T-cell (primary cell): ENCODE measurements at regions of chr10 and their contacts with region 1.

Region 1: DNA sequence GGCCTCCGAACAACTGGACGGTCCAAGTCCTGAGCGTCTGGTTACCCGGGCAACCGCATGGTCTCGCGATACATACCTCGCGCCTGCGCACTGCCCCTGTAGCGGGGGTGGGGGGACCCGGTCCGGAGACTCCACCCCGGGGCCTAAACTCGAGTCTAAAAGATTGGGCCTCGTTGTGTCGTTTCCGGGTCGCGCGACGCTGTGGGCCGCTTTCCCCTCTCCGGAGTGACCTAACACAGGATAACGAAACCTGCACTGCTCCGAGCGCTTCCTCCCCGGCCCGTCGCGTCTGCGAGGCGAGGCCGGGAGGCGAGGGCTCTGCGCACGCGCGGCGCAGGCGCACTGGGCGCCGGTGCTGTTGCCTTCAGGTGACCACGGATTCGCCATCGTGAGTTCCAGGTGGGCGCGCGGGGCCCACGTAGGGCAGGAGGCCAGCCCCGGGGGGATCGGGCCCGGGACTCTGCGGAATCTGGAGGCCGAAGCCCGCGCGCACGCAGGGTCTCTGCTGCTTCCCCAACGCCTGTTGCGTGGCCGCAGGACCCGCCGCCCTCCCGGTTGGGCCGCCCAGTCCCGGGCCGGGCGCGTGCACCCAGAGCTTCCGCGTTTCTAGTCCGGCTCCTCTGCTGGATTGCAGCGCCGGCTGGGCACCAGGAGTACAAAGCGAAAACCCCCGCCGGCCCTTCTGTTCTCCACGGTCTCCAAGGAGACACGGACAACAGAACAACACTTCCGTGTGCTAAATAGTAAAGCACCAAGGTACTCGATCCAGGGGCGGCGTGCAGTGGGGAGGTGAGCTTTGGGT is at the start of gene RPP38:
- DNase-seq: peak; percentile 82 to 96 (median 90)
- ATAC-seq: peak; percentile 84 to 87 (median 86)
- H3K4me3 ChIP-seq: peak within 1 kb of the TSS; percentile 73 to 84
- H3K4me3 Mint-ChIP-seq: peak within 1 kb of the TSS; percentile 93 to 99 (median 95)
- H3K27ac ChIP-seq: peak within 1 kb of the TSS; percentile 91
- H3K27ac Mint-ChIP-seq: peak within 1 kb of the TSS; percentile 93 to 96
- H3K4me1 ChIP-seq: peaks cover 3 to 33% of the 10 kb centered on the region in 2 experiments
- H3K4me1 Mint-ChIP-seq: peaks cover 37 to 45% (median 43%) of the 10 kb centered on the region in 3 donors
- H3K27me3 ChIP-seq: no peaks in the 10 kb centered on the region
- H3K27me3 Mint-ChIP-seq: no peaks in the 10 kb centered on the region
- total RNA-seq, gene RPP38: 8.2 to 21.0 (median 16.6) TPM

Region 2: GRCh38 chr10:14954001-14954770 is 143.0 kb before region 1 on chr10 and contains the start of gene DCLRE1C:
- CTCF ChIA-PET with region 1: no interaction called
- POLR2A ChIA-PET with region 1: interaction called in 1 of 2 experiments, 10 read pairs
- DNase-seq: peak; percentile 72 to 90 (median 80)
- ATAC-seq: peak; percentile 88 to 92 (median 90)
- H3K4me3 ChIP-seq: peak within 1 kb of the TSS; percentile 80 to 83
- H3K4me3 Mint-ChIP-seq: peak within 1 kb of the TSS; percentile 91 to 94 (median 93)
- H3K27ac ChIP-seq: peak within 1 kb of the TSS; percentile 84
- H3K27ac Mint-ChIP-seq: peak within 1 kb of the TSS; percentile 96 to 98
- H3K4me1 ChIP-seq: peaks cover 18 to 55% of the 10 kb centered on the region in 2 experiments
- H3K4me1 Mint-ChIP-seq: peaks cover 51 to 62% (median 60%) of the 10 kb centered on the region in 3 donors
- H3K27me3 ChIP-seq: no peaks in the 10 kb centered on the region
- H3K27me3 Mint-ChIP-seq: no peaks in the 10 kb centered on the region
- total RNA-seq, gene DCLRE1C: 13.6 to 26.5 (median 23.1) TPM

Region 3: GRCh38 chr10:15176269-15176668 is 79.1 kb after region 1 on chr10:
- CTCF ChIA-PET with region 1: no interaction called
- POLR2A ChIA-PET with region 1: no interaction called
- DNase-seq: no peak
- ATAC-seq: no peak
- H3K4me3 ChIP-seq: no peak overlapping the region
- H3K4me3 Mint-ChIP-seq: no peak overlapping the region
- H3K27ac ChIP-seq: no peak overlapping the region
- H3K27ac Mint-ChIP-seq: no peak overlapping the region
- H3K4me1 ChIP-seq: peaks cover 6 to 14% of the 10 kb centered on the region in 2 experiments
- H3K4me1 Mint-ChIP-seq: peaks cover 19 to 34% (median 27%) of the 10 kb centered on the region in 3 donors
- H3K27me3 ChIP-seq: no peaks in the 10 kb centered on the region
- H3K27me3 Mint-ChIP-seq: no peaks in the 10 kb centered on the region

Region 4: GRCh38 chr10:15313843-15314242 is 216.6 kb after region 1 on chr10:
- CTCF ChIA-PET with region 1: no interaction called
- POLR2A ChIA-PET with region 1: no interaction called
- DNase-seq: no peak
- ATAC-seq: no peak
- H3K4me3 ChIP-seq: no peak overlapping the region
- H3K4me3 Mint-ChIP-seq: no peak overlapping the region
- H3K27ac ChIP-seq: no peak overlapping the region
- H3K27ac Mint-ChIP-seq: no peak overlapping the region
- H3K4me1 ChIP-seq: no peaks in the 10 kb centered on the region
- H3K4me1 Mint-ChIP-seq: peaks cover 2 to 9% (median 6%) of the 10 kb centered on the region in 3 donors
- H3K27me3 ChIP-seq: peaks cover 0 to 6% of the 10 kb centered on the region in 2 experiments
- H3K27me3 Mint-ChIP-seq: no peaks in the 10 kb centered on the region

Region 5: DNA sequence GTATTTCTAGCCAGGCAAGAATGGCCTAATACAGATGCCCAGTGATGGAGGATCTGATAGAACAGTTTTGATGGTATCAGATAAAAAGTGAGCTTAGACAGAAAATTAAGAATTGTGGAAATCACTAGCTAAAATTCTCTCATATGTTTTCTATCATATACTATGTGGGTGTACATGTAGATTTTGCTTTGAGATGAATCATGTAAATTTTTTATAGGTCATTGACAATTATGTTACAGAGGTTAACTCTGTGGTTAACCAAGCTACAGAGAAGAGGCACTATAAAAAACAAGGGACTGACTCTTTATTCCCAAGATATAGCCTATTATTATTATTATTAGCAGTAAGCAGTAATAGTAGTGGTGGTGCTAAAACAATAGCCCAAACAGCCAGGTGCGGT is 466.0 kb after region 1 on chr10:
- CTCF ChIA-PET with region 1: no interaction called
- POLR2A ChIA-PET with region 1: no interaction called
- DNase-seq: no peak
- ATAC-seq: no peak
- H3K4me3 ChIP-seq: no peak overlapping the region
- H3K4me3 Mint-ChIP-seq: no peak overlapping the region
- H3K27ac ChIP-seq: no peak overlapping the region
- H3K27ac Mint-ChIP-seq: no peak overlapping the region
- H3K4me1 ChIP-seq: no peaks in the 10 kb centered on the region
- H3K4me1 Mint-ChIP-seq: no peaks in the 10 kb centered on the region
- H3K27me3 ChIP-seq: peaks cover 0 to 4% of the 10 kb centered on the region in 2 experiments
- H3K27me3 Mint-ChIP-seq: peaks cover 15 to 16% of the 10 kb centered on the region in 2 donors